AG04450 (cell line): ENCODE measurements at regions of chr10 and their contacts with region 1.

Region 1: DNA sequence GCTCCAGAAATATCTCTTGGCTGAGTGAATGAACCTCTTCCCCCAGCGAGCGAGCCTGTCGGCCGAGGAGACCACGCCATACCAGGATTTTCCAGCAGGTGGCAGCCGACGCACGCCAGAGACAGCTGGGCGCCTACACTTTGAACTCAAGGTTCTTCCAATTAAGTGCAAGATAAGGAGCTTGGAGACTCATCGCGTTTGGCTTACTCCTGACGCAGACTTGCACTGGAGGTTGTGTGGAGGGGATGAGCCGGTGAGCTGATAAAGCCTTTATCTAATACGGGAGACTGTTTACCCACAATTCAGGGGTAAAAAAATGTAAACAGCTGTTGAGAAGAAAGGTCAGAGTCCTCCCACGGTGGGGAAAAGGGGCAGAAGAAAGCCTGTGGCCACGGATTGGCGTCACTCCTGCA is 45.9 kb upstream of the EMX2 start:
- DNase-seq: peak; percentile 38
- H3K4me3 ChIP-seq: no peak overlapping the region
- H3K27ac ChIP-seq: no peak overlapping the region
- H3K27me3 ChIP-seq: no peaks in the 10 kb centered on the region
- CTCF ChIP-seq: peak; percentile 96

Region 2: DNA sequence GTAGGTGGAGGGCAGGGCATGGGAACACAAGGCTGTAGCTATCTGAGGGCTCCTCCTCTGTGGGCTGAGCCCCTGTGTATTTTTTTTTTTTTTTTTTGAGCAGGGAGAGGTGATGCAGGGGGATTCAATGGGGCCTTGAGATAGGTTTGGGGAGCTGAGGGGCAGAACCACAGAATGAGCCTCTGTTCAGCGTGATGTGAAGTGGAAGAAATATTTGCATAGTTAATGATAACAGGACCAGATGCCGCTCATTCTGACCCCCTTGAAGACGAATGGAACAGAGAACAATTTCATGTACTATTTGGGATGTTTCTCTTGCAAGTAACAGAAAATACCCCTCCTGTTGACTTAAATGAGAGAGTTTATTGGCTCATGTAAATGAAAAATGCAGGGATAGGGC is 23.8 kb before region 1 on chr10:
- CTCF ChIA-PET with region 1: no interaction called
- POLR2A ChIA-PET with region 1: no interaction called
- DNase-seq: no peak
- H3K4me3 ChIP-seq: no peak overlapping the region
- H3K27ac ChIP-seq: no peak overlapping the region
- H3K27me3 ChIP-seq: no peaks in the 10 kb centered on the region
- CTCF ChIP-seq: no peak

Region 3: GRCh38 chr10:118241229-118242137 is 744.9 kb after region 1 on chr10:
- CTCF ChIA-PET with region 1: interaction called, 150 read pairs
- POLR2A ChIA-PET with region 1: no interaction called
- DNase-seq: peak; percentile 57
- H3K4me3 ChIP-seq: no peak overlapping the region
- H3K27ac ChIP-seq: no peak overlapping the region
- H3K27me3 ChIP-seq: peaks cover 12% of the 10 kb centered on the region
- CTCF ChIP-seq: peak; percentile 94

Region 4: DNA sequence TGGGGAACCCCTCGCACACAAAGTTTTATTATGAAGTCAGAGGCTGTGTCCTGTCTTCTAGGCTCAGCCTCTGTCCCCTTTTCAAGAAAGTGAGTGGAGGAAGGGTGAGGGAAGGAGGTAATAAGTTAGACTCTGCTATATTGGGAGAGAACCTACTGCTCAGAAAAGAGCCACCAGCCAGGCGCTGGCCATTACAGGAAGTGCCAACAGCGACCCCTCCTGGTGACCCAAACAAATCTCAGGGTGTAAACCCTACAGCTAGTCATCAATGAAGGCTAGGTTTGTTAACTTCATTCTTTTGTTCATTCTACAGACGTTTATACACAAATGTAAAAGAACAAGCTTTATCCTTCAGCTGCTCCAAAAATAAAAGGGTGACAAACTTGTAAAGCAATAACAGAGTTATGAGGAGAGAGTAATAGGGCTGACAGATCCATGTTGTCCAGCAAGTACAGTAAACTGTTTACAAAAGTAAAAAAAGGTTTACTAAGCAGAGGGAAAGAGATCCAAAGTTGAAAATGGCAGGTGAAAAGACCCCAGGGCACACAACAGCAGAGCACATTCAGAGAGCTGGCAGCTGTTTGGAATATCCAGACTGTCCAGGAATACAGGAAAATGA is 762.8 kb after region 1 on chr10:
- CTCF ChIA-PET with region 1: interaction called, 23 read pairs
- POLR2A ChIA-PET with region 1: no interaction called
- DNase-seq: no peak
- H3K4me3 ChIP-seq: no peak overlapping the region
- H3K27ac ChIP-seq: no peak overlapping the region
- H3K27me3 ChIP-seq: no peaks in the 10 kb centered on the region
- CTCF ChIP-seq: peak; percentile 53

Region 5: GRCh38 chr10:118272149-118272721 is 775.6 kb after region 1 on chr10:
- CTCF ChIA-PET with region 1: interaction called, 11 read pairs
- POLR2A ChIA-PET with region 1: no interaction called
- DNase-seq: peak; percentile 6
- H3K4me3 ChIP-seq: peak overlapping the region; percentile 21
- H3K27ac ChIP-seq: peak overlapping the region; percentile 58
- H3K27me3 ChIP-seq: peaks cover 4% of the 10 kb centered on the region
- CTCF ChIP-seq: no peak

Region 6: DNA sequence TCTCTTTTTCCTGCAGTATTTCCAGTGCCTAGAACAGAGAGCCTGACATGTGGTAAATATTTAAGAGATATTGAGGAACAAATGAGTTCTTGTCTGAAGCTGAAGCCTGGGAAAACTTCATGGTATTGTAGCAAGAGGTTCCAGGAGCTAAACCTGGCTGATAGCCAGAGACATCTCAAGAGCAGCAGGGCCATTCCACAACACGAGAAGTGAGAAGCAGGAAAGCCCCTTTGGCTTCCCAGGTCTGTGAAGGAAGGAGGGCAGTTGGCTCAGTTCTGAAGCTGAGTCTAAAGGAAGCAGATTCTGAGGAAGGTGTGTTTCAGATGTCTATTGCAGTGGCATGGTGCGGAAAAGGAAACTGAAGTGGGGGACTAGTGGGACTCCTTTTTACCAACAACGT is 909.3 kb after region 1 on chr10:
- CTCF ChIA-PET with region 1: interaction called, 12 read pairs
- POLR2A ChIA-PET with region 1: no interaction called
- DNase-seq: no peak
- H3K4me3 ChIP-seq: no peak overlapping the region
- H3K27ac ChIP-seq: no peak overlapping the region
- H3K27me3 ChIP-seq: no peaks in the 10 kb centered on the region
- CTCF ChIP-seq: no peak

Region 7: DNA sequence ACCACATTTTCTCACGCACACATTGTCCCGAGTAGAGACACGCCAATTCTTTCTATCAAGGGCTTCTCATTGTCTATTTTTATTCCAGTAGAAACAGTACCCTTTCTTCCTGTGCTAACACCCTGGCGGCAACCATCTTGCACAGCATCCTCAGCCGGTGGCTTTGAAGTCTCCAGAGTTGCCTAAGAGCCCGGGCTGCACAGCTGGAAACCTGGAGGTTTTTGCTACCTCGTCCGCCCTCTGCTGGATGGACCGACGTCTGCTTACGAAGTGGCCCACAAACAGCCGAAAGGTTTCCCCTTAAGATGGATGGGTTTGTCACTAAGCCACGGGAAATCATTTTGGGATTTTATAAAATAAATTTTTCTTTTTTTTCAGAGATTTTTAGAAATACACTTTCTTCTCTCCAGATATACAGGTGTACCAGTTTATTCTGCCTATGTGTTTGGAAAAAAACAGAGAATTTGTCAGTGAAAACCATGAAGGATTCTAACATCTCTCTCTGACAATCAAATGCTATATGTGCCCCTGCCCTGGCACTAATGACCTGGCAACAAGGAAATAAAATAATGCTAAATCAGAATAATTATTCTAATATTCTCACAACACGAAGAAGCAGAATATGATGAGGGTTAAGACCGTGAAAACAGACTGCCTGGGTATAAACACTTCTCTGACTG is 927.3 kb after region 1 on chr10:
- CTCF ChIA-PET with region 1: interaction called, 16 read pairs
- POLR2A ChIA-PET with region 1: no interaction called
- DNase-seq: peak; percentile 62
- H3K4me3 ChIP-seq: no peak overlapping the region
- H3K27ac ChIP-seq: no peak overlapping the region
- H3K27me3 ChIP-seq: no peaks in the 10 kb centered on the region
- CTCF ChIP-seq: peak; percentile 81

Region 8: GRCh38 chr10:118459726-118460193 is 963.1 kb after region 1 on chr10:
- CTCF ChIA-PET with region 1: interaction called, 89 read pairs
- POLR2A ChIA-PET with region 1: no interaction called
- DNase-seq: peak; percentile 18
- H3K4me3 ChIP-seq: no peak overlapping the region
- H3K27ac ChIP-seq: no peak overlapping the region
- H3K27me3 ChIP-seq: no peaks in the 10 kb centered on the region
- CTCF ChIP-seq: peak; percentile 84